CD8-positive, alpha-beta T cell (primary cell): ENCODE measurements at regions of chr9 and their contacts with region 1.

Region 1: DNA sequence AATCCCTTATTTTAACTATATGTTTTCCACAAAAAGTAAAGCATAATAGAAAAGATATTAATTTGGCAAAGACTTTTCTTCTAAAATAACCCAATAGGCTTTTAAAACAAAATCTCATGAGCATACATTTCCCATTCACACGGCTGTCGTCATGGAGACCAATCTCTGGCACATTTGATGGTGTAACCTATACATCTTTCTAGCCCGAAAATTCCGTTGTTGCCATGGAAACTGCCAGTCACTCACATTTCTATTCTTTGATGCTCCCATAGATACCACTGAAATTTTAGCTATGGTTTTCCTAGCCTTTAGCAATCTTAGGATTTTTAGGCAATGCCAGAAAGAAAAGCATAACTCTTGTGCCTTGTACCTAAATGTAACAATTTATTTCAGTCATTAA is 262.9 kb upstream of the TRPM3 start:
- DNase-seq: no peak
- ATAC-seq: no peak
- H3K4me3 ChIP-seq: no peak overlapping the region
- H3K4me3 Mint-ChIP-seq: no peak overlapping the region
- H3K27ac ChIP-seq: no peak overlapping the region
- H3K27ac Mint-ChIP-seq: no peak overlapping the region
- H3K4me1 ChIP-seq: no peaks in the 10 kb centered on the region
- H3K4me1 Mint-ChIP-seq: no peaks in the 10 kb centered on the region
- H3K27me3 ChIP-seq: no peaks in the 10 kb centered on the region
- H3K27me3 Mint-ChIP-seq: no peaks in the 10 kb centered on the region
- CTCF ChIP-seq: no peak

Region 2: GRCh38 chr9:71368157-71368556 is 16.2 kb before region 1 on chr9:
- CTCF ChIA-PET with region 1: no interaction called
- POLR2A ChIA-PET with region 1: no interaction called
- intact Hi-C with region 1: no loop called
- DNase-seq: no peak
- ATAC-seq: no peak
- H3K4me3 ChIP-seq: no peak overlapping the region
- H3K4me3 Mint-ChIP-seq: no peak overlapping the region
- H3K27ac ChIP-seq: no peak overlapping the region
- H3K27ac Mint-ChIP-seq: no peak overlapping the region
- H3K4me1 ChIP-seq: no peaks in the 10 kb centered on the region
- H3K4me1 Mint-ChIP-seq: no peaks in the 10 kb centered on the region
- H3K27me3 ChIP-seq: no peaks in the 10 kb centered on the region
- H3K27me3 Mint-ChIP-seq: peaks cover 3% of the 10 kb centered on the region
- CTCF ChIP-seq: no peak

Region 3: DNA sequence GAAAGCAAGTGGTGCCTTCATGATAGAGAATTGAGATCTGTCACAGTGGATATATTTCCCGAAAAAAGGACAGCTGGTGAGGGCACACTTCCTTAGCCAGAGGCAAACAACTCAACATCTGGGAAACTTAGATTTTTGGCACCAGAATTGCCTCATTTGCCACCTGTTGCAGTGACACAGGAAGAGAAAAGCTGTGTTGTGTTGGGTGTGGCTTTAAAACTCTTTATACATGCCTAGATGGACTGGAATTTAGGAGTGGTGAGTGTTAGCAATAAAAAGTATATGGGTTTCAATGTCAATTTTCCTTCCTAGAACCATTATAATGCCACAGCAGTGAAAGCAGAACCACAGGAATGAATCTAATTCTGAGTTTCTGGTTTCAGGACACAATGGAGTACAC is 446.6 kb after region 1 on chr9:
- CTCF ChIA-PET with region 1: no interaction called
- POLR2A ChIA-PET with region 1: no interaction called
- intact Hi-C with region 1: loop called in 1 of 2 experiments (anchors 10 kb)
- DNase-seq: no peak
- ATAC-seq: no peak
- H3K4me3 ChIP-seq: no peak overlapping the region
- H3K4me3 Mint-ChIP-seq: no peak overlapping the region
- H3K27ac ChIP-seq: no peak overlapping the region
- H3K27ac Mint-ChIP-seq: no peak overlapping the region
- H3K4me1 ChIP-seq: no peaks in the 10 kb centered on the region
- H3K4me1 Mint-ChIP-seq: no peaks in the 10 kb centered on the region
- H3K27me3 ChIP-seq: no peaks in the 10 kb centered on the region
- H3K27me3 Mint-ChIP-seq: no peaks in the 10 kb centered on the region
- CTCF ChIP-seq: no peak